ENCODE measurements at regions of chr16 and their contacts with region 1.

Region 1: GRCh38 chr16:9008601-9009260 is 45.0 kb upstream of the USP7 start:
- DNase-seq: peak; percentile 43
- ATAC-seq: peak; percentile 98
- H3K4me3 ChIP-seq: peak overlapping the region; percentile 42 to 77
- H3K27ac ChIP-seq: peak overlapping the region; percentile 68
- H3K4me1 ChIP-seq: no peaks in the 10 kb centered on the region
- H3K27me3 ChIP-seq: no peaks in the 10 kb centered on the region
- CTCF ChIP-seq: peak; percentile 97

Region 2: GRCh38 chr16:8905168-8905762 is 103.5 kb before region 1 on chr16:
- CTCF ChIA-PET with region 1: interaction called, 6 read pairs
- POLR2A ChIA-PET with region 1: no interaction called
- in situ Hi-C with region 1: no loop called
- intact Hi-C with region 1: loop called (anchors 2 kb)
- DNase-seq: peak; percentile 35
- ATAC-seq: peak; percentile 89
- H3K4me3 ChIP-seq: no peak overlapping the region
- H3K27ac ChIP-seq: no peak overlapping the region
- H3K4me1 ChIP-seq: no peaks in the 10 kb centered on the region
- H3K27me3 ChIP-seq: no peaks in the 10 kb centered on the region
- CTCF ChIP-seq: peak; percentile 70

Region 3: DNA sequence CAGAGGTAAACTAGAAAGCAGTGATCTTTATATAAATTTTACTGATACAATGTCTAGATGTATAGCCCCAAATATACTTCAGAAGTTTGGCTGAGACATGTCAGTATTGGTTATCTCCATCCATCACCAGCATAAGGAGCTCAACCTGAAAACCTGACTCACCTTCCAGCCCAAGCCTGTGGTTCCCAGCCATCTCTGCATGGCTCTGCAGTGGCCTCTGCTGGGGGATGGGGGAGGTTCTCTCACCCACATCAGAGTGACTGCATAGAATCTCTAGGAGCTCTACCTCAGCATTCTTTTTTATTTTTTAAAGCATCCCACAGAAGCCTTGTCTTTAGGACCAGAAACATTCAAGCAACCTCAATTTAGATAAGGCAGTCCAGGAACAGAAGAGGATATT is 72.3 kb before region 1 on chr16:
- CTCF ChIA-PET with region 1: interaction called, 18 read pairs
- POLR2A ChIA-PET with region 1: interaction called, 3 read pairs
- in situ Hi-C with region 1: no loop called
- intact Hi-C with region 1: no loop called
- DNase-seq: peak; percentile 32
- ATAC-seq: peak; percentile 90
- H3K4me3 ChIP-seq: no peak overlapping the region
- H3K27ac ChIP-seq: no peak overlapping the region
- H3K4me1 ChIP-seq: peaks cover 29% of the 10 kb centered on the region
- H3K27me3 ChIP-seq: no peaks in the 10 kb centered on the region
- CTCF ChIP-seq: peak; percentile 79

Region 4: GRCh38 chr16:8949541-8950418 is 59.0 kb before region 1 on chr16:
- CTCF ChIA-PET with region 1: interaction called, 11 read pairs
- POLR2A ChIA-PET with region 1: no interaction called
- in situ Hi-C with region 1: no loop called
- intact Hi-C with region 1: no loop called
- DNase-seq: no peak
- ATAC-seq: no peak
- H3K4me3 ChIP-seq: no peak overlapping the region
- H3K27ac ChIP-seq: no peak overlapping the region
- H3K4me1 ChIP-seq: peaks cover 48% of the 10 kb centered on the region
- H3K27me3 ChIP-seq: no peaks in the 10 kb centered on the region
- CTCF ChIP-seq: no peak

Region 5: DNA sequence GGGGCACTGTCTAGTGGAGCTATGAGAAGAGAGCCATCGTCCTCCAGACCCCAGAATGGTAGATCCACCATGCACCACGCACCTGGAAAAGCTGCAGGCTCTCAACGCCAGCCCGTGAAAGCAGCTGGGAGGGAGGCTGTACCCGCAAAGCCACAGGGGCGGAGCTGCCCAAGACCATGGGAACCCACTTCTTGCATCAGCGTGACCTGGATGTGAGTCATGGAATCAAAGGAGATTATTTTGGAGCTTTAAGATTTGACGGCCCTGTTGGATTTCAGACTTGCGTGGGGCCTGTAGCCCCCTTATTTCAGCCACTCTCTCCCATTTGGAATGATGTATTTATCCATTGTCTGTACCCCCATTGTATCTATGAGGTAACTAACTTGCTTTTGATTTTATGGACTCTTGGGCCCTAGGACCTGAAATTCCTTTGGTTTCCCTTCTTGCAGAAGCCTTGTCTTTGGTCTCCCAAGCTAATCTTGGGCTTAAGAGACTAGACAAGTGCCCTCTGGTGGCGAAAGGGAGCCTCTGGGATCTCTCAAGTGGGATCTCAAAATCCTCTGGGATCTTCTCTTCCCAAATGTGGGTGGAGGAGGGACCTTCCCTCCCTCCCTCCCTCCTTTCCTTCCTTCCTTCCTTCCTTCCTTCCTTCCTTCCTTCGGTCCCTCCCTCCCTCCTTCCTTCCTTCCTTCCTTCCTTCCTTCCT is 24.5 kb after region 1 on chr16:
- CTCF ChIA-PET with region 1: interaction called, 15 read pairs
- POLR2A ChIA-PET with region 1: no interaction called
- in situ Hi-C with region 1: no loop called
- intact Hi-C with region 1: no loop called
- DNase-seq: no peak
- ATAC-seq: peak; percentile 88
- H3K4me3 ChIP-seq: no peak overlapping the region
- H3K27ac ChIP-seq: no peak overlapping the region
- H3K4me1 ChIP-seq: no peaks in the 10 kb centered on the region
- H3K27me3 ChIP-seq: no peaks in the 10 kb centered on the region
- CTCF ChIP-seq: no peak; the same call in none of the 2 replicates

Region 6: GRCh38 chr16:9047686-9048301 is 39.1 kb after region 1 on chr16:
- CTCF ChIA-PET with region 1: interaction called, 10 read pairs
- POLR2A ChIA-PET with region 1: no interaction called
- in situ Hi-C with region 1: no loop called
- intact Hi-C with region 1: no loop called
- DNase-seq: peak; percentile 98
- ATAC-seq: peak; percentile 96
- H3K4me3 ChIP-seq: peak overlapping the region in 1 of 2 experiments; percentile 14; a peak in 1 of 4 replicates
- H3K27ac ChIP-seq: peak overlapping the region; percentile 94
- H3K4me1 ChIP-seq: peaks cover 28% of the 10 kb centered on the region
- H3K27me3 ChIP-seq: no peaks in the 10 kb centered on the region
- CTCF ChIP-seq: no peak

Region 7: GRCh38 chr16:9123871-9124270 is 115.1 kb after region 1 on chr16:
- CTCF ChIA-PET with region 1: no interaction called
- POLR2A ChIA-PET with region 1: no interaction called
- in situ Hi-C with region 1: no loop called
- intact Hi-C with region 1: no loop called
- DNase-seq: no peak
- ATAC-seq: peak; percentile 40
- H3K4me3 ChIP-seq: no peak overlapping the region
- H3K27ac ChIP-seq: peak overlapping the region; percentile 34; the same call in 1 of the 2 replicates
- H3K4me1 ChIP-seq: peaks cover 58% of the 10 kb centered on the region
- H3K27me3 ChIP-seq: no peaks in the 10 kb centered on the region
- CTCF ChIP-seq: no peak

Measured in Panc1 (cell line).